ENCODE measurements at regions of chr9 and their contacts with region 1.

Region 1: GRCh38 chr9:17802249-17802857 is 223.5 kb downstream of the SH3GL2 start:
- DNase-seq: no peak
- ATAC-seq: no peak
- H3K4me3 ChIP-seq: no peak overlapping the region
- H3K27ac ChIP-seq: no peak overlapping the region
- H3K4me1 ChIP-seq: peaks cover 0 to 8% (median 0%) of the 10 kb centered on the region in 9 donors
- H3K27me3 ChIP-seq: peaks cover 0 to 22% (median 3%) of the 10 kb centered on the region in 7 donors
- CTCF ChIP-seq: peak in 7 of 9 donors; percentile 26 to 56 (median 48)

Region 2: DNA sequence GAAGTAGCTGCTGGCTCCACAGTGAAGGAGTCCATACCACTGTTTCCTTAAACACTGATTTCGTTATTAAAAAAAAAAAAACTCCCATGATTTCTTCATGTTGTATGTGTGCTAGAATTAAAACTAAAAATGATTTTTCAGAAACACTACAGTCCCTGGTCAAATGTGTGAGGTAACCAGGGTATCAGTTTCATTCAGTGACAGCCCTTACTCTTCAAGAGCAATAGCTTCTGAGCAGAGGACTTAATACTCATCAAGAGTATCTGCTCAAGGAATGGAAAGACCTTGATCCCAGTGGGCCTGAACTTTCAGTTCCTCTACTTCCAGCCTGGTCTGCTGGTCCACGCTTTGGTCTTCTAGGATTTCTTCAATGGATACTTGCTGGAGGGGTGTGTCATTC is 1027.0 kb before region 1 on chr9:
- intact Hi-C with region 1: loop called in 1 of 10 experiments (anchors 5 kb)
- DNase-seq: no peak
- ATAC-seq: no peak
- H3K4me3 ChIP-seq: no peak overlapping the region
- H3K27ac ChIP-seq: no peak overlapping the region
- H3K4me1 ChIP-seq: no peaks in the 10 kb centered on the region
- H3K27me3 ChIP-seq: peaks cover 0 to 6% (median 0%) of the 10 kb centered on the region in 7 donors
- CTCF ChIP-seq: no peak

Region 3: GRCh38 chr9:17613763-17614162 is 188.6 kb before region 1 on chr9:
- intact Hi-C with region 1: no loop called
- DNase-seq: no peak
- ATAC-seq: no peak
- H3K4me3 ChIP-seq: no peak overlapping the region
- H3K27ac ChIP-seq: no peak overlapping the region
- H3K4me1 ChIP-seq: peaks cover 0 to 14% (median 0%) of the 10 kb centered on the region in 9 donors
- H3K27me3 ChIP-seq: no peaks in the 10 kb centered on the region
- CTCF ChIP-seq: no peak

Region 4: GRCh38 chr9:17744786-17745185 is 57.6 kb before region 1 on chr9:
- intact Hi-C with region 1: no loop called
- DNase-seq: no peak
- ATAC-seq: no peak
- H3K4me3 ChIP-seq: no peak overlapping the region
- H3K27ac ChIP-seq: no peak overlapping the region
- H3K4me1 ChIP-seq: no peaks in the 10 kb centered on the region
- H3K27me3 ChIP-seq: no peaks in the 10 kb centered on the region
- CTCF ChIP-seq: no peak

Region 5: DNA sequence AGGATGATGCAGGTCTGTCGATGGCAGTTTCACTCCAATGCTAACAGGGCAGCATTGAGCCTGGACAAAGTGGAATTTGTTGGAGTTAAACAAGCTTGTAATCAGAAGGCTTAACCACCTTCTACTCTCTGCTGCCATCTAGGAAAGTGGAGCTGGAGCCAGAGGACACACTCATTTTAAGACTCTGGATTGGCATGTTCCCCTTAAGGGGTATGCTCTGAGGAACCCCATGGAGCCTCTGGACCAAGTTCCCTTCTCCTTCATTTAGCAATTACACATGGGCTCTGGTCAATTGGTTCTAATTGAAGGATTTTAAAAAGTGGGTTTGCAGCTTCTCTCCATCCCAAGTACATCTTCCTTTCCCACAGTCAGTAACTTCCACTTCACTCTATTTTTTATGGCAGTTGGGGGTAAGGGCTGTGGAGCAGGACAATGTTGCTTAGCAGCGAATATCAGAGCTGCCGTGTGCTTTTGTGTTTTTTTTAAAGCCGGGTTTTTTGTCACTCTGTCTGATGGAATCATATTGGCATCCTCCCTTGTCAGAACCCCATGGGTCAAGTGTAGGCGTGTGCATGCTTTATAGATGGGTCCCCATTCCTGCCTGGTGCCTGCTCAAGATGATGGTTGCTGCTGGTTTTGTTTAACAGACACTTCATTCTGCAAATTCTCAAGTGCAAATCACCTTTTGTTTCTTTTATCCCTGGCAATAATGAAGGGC is 340.8 kb after region 1 on chr9:
- intact Hi-C with region 1: loop called in 1 of 10 experiments (anchors 10 kb)
- DNase-seq: no peak
- ATAC-seq: no peak
- H3K4me3 ChIP-seq: no peak overlapping the region
- H3K27ac ChIP-seq: no peak overlapping the region
- H3K4me1 ChIP-seq: no peaks in the 10 kb centered on the region
- H3K27me3 ChIP-seq: peaks cover 0 to 7% (median 0%) of the 10 kb centered on the region in 7 donors
- CTCF ChIP-seq: peak in 6 of 9 donors; percentile 15 to 30 (median 18)

Region 6: DNA sequence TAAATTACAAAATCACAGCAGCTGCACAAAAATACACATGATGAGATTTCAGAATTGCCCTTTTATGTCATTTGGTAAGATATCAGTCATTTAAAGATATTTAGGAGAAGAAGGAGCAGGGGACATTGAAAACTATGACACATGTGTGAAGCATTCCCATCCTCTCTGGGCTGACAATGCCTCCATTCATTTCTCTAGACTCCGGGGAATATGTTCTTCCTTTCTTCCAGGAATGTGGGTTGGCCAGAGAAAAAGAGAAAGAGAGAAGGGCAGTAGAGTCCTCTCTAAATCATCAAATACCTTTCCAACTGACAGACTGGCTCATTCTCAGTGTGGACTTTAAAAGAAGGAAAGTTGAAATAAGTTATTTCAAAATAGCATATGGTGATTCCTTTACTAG is 466.0 kb after region 1 on chr9:
- intact Hi-C with region 1: no loop called
- DNase-seq: no peak
- ATAC-seq: peak in 5 of 8 donors; percentile 34 to 92 (median 68)
- H3K4me3 ChIP-seq: no peak overlapping the region
- H3K27ac ChIP-seq: no peak overlapping the region
- H3K4me1 ChIP-seq: peaks cover 0 to 9% (median 0%) of the 10 kb centered on the region in 9 donors
- H3K27me3 ChIP-seq: no peaks in the 10 kb centered on the region
- CTCF ChIP-seq: no peak

Region 7: DNA sequence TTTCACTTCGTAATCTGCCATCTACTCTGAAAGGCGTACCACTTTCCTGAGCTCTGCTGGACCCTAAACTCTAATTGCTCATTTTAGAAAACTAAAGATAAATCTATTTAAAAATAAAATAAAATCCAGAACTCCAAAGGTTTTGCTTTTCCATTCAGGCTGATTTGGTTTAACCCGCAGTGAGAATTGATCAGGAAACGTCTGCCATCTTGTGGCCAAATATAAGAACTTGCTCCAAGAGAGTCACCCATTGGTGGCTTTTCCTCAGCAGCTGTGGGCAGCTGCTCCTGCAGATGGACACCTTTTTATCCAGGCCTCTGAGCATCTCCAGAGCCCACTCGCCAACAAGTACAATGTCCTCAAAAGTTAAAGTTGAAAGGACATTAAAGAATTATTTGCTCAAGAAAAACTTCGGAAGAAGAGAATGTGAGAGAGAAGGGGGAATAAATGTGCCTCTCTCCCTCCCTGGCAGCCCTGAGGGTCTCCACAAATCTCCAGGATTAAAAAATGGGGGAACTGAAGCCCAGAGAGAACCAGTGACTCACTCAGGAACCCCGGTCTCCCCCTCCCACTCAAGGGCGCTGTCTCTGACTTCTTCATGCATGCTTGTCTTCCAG is 1226.6 kb after region 1 on chr9:
- intact Hi-C with region 1: loop called in 1 of 10 experiments (anchors 10 kb)
- DNase-seq: peak in 1 of 2 donors; percentile 60
- ATAC-seq: peak in 6 of 8 donors; percentile 65 to 81 (median 74)
- H3K4me3 ChIP-seq: no peak overlapping the region
- H3K27ac ChIP-seq: no peak overlapping the region
- H3K4me1 ChIP-seq: peaks cover 0 to 12% (median 0%) of the 10 kb centered on the region in 9 donors
- H3K27me3 ChIP-seq: peaks cover 0 to 5% (median 0%) of the 10 kb centered on the region in 7 donors
- CTCF ChIP-seq: peak; percentile 60 to 86 (median 78)